ENCODE measurements at regions of chr6 and their contacts with region 1.

Region 1: GRCh38 chr6:142474531-142475289 is 172.9 kb downstream of the ADGRG6 start:
- DNase-seq: no peak

Region 2: DNA sequence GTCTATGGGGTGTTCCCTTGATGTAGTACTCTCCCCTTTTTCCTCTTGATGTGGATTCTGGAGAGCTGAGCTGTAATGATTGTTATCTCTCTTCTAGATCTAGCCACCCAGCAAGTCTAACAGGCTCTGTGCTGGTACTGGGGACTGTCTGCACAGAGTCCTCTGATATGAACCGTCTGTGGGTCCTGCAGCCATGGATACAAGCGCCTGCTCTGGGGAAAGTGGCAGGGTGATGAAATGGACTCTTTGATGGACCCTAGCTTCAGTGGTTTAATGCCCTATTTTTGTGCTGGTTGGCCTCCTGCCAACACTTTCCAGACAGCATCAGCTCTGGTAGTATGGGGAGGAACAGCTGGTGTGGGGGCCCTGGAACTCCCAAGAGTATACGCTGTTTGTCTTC is 43.4 kb after region 1 on chr6:
- intact Hi-C with region 1: no loop called
- DNase-seq: no peak

Region 3: DNA sequence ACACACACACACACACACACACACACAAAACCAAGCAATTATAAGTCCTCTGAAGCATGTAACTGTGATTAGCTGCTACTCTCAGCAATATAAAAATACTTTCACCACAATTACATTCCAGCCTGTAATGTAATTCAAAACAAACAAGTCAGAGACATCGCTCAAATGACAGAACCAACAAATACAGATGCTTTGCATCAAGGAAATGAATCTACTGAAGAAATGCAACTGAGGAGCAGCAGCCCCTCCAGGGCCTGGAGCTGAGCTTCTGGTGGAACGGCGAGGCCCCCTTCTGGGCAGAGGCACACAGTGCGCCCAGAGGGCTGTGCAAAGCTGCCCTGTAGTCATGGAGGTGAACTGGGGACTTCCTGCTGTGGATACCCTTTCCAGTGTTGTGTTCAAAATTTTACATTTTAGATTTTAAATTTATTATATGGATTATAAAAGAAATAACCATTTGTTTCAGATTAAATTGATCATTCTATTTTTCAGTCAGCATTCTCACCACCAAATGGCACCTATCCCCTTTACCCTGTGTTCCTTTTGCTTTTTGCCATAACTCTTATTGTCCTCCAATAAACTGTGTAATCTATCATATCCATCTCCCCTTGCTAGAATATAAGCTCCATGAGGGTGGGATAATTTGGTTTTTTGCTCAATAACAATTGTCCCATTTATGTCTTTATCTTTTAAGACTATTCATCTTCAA is 952.6 kb after region 1 on chr6:
- intact Hi-C with region 1: loop called (anchors 5 kb)
- DNase-seq: peak; percentile 80

Measured in cardiac septum (tissue), 1 donor.